ENCODE measurements at regions of chr3 and their contacts with region 1.

Region 1: GRCh38 chr3:105868742-105869530 is at the start of gene CBLB:
- DNase-seq: peak; percentile 69 to 94 (median 82)
- ATAC-seq: peak; percentile 86
- H3K4me3 ChIP-seq: peak within 1 kb of the TSS; percentile 93 to 98
- H3K4me3 Mint-ChIP-seq: peak within 1 kb of the TSS; percentile 93
- H3K27ac ChIP-seq: peak within 1 kb of the TSS; percentile 77 to 85
- H3K27ac Mint-ChIP-seq: peak within 1 kb of the TSS; percentile 93
- H3K4me1 ChIP-seq: peaks cover 36% of the 10 kb centered on the region
- H3K4me1 Mint-ChIP-seq: peaks cover 49% of the 10 kb centered on the region
- H3K27me3 ChIP-seq: no peaks in the 10 kb centered on the region
- H3K27me3 Mint-ChIP-seq: no peaks in the 10 kb centered on the region
- CTCF ChIP-seq: no peak
- total RNA-seq, gene CBLB: 133 to 140 TPM

Region 2: DNA sequence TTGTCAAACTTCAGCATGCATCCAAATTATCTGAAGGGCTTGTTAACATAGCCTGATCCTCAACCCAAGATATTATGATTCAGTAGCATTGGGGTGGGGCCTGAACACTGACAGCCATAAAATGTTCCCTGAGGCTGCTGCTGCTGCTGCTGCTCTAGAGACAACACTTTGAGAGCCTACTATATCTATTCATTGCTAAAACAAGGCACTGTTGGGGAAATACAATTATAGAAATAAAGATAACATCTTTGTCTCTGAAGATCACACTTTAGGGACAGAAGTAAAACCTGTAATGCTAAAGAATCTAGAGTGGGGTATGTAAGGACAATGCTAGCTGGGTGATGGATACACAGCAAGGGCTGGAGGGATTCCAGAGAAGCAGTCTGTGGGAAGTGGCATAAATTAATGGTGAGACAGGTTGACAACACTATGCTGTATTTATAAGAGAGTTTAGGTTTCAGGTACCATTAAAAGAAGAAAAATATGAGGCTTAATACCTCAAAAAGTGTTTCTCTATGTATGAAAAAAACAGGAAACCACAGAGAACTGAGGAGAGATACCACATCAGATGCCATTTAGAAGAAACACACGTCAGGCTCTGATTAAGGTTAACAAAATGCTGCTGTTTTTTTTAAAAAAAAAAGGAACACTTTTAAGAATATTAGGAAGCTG is 116.1 kb before region 1 on chr3:
- CTCF ChIA-PET with region 1: no interaction called
- POLR2A ChIA-PET with region 1: no interaction called
- intact Hi-C with region 1: loop called (anchors 1 to 5 kb)
- DNase-seq: peak; percentile 13 to 89 (median 55)
- ATAC-seq: peak; percentile 79
- H3K4me3 ChIP-seq: peak overlapping the region; percentile 10 to 21
- H3K4me3 Mint-ChIP-seq: peak overlapping the region; percentile 56
- H3K27ac ChIP-seq: peak overlapping the region; percentile 70 to 85
- H3K27ac Mint-ChIP-seq: peak overlapping the region; percentile 98
- H3K4me1 ChIP-seq: peaks cover 84% of the 10 kb centered on the region
- H3K4me1 Mint-ChIP-seq: peaks cover 80% of the 10 kb centered on the region
- H3K27me3 ChIP-seq: no peaks in the 10 kb centered on the region
- H3K27me3 Mint-ChIP-seq: no peaks in the 10 kb centered on the region
- CTCF ChIP-seq: no peak

Region 3: GRCh38 chr3:105806361-105806760 is 62.6 kb before region 1 on chr3:
- CTCF ChIA-PET with region 1: no interaction called
- POLR2A ChIA-PET with region 1: no interaction called
- intact Hi-C with region 1: loop called (anchors 1 to 5 kb)
- DNase-seq: peak in 4 of 9 experiments; percentile 25 to 83 (median 58)
- ATAC-seq: peak; percentile 90
- H3K4me3 ChIP-seq: no peak overlapping the region
- H3K4me3 Mint-ChIP-seq: no peak overlapping the region
- H3K27ac ChIP-seq: peak overlapping the region in 1 of 2 experiments; percentile 2
- H3K27ac Mint-ChIP-seq: peak overlapping the region; percentile 60
- H3K4me1 ChIP-seq: peaks cover 23% of the 10 kb centered on the region
- H3K4me1 Mint-ChIP-seq: peaks cover 73% of the 10 kb centered on the region
- H3K27me3 ChIP-seq: no peaks in the 10 kb centered on the region
- H3K27me3 Mint-ChIP-seq: no peaks in the 10 kb centered on the region
- CTCF ChIP-seq: no peak

Region 4: DNA sequence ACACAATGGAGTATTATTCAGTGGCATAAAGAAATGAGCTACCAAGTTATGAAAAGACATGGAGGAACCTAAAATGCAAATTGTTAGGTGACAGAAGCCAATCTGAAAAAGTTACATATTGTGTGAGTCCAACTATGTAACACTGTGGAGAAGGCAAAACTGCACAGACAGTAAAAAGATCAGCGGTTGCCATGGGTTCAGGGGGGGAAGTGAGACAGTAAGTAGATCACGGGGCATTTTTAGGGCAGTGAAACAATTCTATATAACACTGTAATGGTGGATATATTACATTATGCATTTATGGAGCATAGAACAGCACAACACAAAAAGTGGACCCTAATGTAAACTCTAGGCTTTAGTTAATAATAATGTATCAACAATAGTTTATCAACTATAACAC is 17.8 kb before region 1 on chr3:
- CTCF ChIA-PET with region 1: no interaction called
- POLR2A ChIA-PET with region 1: no interaction called
- intact Hi-C with region 1: loop called in 1 of 2 experiments (anchors 2 kb)
- DNase-seq: no peak
- ATAC-seq: no peak
- H3K4me3 ChIP-seq: no peak overlapping the region
- H3K4me3 Mint-ChIP-seq: peak overlapping the region; percentile 38
- H3K27ac ChIP-seq: no peak overlapping the region
- H3K27ac Mint-ChIP-seq: peak overlapping the region; percentile 65
- H3K4me1 ChIP-seq: peaks cover 42% of the 10 kb centered on the region
- H3K4me1 Mint-ChIP-seq: peaks cover 72% of the 10 kb centered on the region
- H3K27me3 ChIP-seq: no peaks in the 10 kb centered on the region
- H3K27me3 Mint-ChIP-seq: no peaks in the 10 kb centered on the region
- CTCF ChIP-seq: no peak

Region 5: DNA sequence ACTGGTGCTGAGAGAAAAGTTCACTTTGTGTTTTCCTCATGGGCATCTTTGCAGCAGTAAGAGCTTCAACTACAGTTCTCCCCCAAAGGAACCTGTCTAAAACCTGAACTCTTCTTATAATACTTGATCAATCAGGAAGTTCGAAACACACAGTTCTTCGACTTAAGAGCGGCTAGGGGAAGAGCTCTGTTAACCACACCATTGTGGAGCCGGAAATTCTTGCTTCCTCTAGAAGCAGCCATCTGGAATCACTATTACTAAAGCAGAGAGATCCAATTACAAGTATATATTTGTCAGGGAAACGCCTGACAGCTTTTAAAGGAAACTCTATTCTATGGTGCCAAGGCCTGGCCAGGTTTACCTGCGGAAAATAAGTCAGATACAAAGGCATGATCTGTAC is 337.2 kb after region 1 on chr3:
- CTCF ChIA-PET with region 1: no interaction called
- POLR2A ChIA-PET with region 1: interaction called, 3 read pairs
- intact Hi-C with region 1: loop called in 1 of 2 experiments (anchors 2 kb)
- DNase-seq: peak in 4 of 9 experiments; percentile 8 to 65 (median 32)
- ATAC-seq: peak; percentile 68
- H3K4me3 ChIP-seq: peak overlapping the region; percentile 1 to 14
- H3K4me3 Mint-ChIP-seq: peak overlapping the region; percentile 76
- H3K27ac ChIP-seq: peak overlapping the region; percentile 11 to 47
- H3K27ac Mint-ChIP-seq: peak overlapping the region; percentile 89
- H3K4me1 ChIP-seq: peaks cover 24% of the 10 kb centered on the region
- H3K4me1 Mint-ChIP-seq: peaks cover 39% of the 10 kb centered on the region
- H3K27me3 ChIP-seq: no peaks in the 10 kb centered on the region
- H3K27me3 Mint-ChIP-seq: no peaks in the 10 kb centered on the region
- CTCF ChIP-seq: no peak

Region 6: DNA sequence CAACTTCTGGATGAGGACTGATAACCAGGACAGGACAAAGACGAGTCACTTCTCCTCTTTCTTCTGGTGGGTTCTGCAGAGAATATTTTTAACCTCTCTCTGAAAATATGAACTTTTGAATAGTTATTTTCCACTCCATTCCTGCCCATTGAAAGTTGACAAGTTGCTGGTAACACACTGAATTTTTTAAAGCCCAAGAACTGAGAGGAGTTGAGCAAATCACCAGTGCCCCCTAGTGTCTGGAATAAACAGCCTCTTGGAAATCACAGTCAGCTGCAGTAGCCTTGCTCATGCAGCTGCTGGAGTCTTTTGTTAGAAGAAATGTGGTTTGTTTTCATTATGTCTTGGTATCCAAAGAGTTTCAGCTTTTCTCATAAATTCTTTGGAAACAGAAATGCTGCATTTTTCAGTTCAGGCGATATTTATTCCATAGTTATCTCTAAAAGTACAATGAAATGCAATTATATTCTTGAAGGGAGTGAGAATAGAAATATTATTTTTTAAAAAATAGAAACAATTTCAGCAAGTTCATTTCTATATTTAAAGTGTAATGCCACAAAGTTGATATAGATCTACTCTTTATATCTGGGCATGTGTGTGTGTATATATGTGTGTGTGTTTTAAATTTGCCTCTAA is 740.8 kb after region 1 on chr3:
- CTCF ChIA-PET with region 1: no interaction called
- POLR2A ChIA-PET with region 1: no interaction called
- intact Hi-C with region 1: loop called in 1 of 2 experiments (anchors 10 kb)
- DNase-seq: peak; percentile 37 to 81 (median 56)
- ATAC-seq: peak; percentile 76
- H3K4me3 ChIP-seq: no peak overlapping the region
- H3K4me3 Mint-ChIP-seq: no peak overlapping the region
- H3K27ac ChIP-seq: no peak overlapping the region
- H3K27ac Mint-ChIP-seq: no peak overlapping the region
- H3K4me1 ChIP-seq: no peaks in the 10 kb centered on the region
- H3K4me1 Mint-ChIP-seq: peaks cover 4% of the 10 kb centered on the region
- H3K27me3 ChIP-seq: no peaks in the 10 kb centered on the region
- H3K27me3 Mint-ChIP-seq: no peaks in the 10 kb centered on the region
- CTCF ChIP-seq: peak; percentile 88